Calu3 (cell line): ENCODE measurements at regions of chr2 and their contacts with region 1.

Region 1: DNA sequence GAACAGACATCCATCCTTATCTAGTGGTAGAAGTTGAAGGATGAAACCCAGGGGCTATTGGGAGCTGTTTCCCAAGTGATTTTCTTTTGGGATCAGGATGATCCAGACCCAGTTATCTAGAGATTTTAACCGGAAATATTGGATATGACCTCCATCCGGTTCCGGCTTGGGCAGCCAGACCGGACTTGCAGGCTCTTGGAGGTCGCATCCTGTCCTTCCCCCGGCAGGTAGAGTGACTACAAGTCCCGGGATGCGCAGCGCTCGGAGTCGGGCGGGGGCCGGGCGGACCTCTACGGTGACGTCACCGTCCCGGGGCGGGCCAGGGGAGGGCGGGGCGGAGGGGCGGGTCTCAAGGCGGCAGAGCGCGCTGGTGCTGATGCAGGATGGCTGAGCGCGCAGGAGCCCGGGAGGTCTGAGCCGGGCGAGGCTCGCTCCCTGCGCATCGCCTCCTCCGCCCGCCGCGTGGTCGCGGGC is at the start of gene KIF5C:
- DNase-seq: peak; percentile 91
- H3K4me3 Mint-ChIP-seq: peak within 1 kb of the TSS; percentile 54
- H3K27ac Mint-ChIP-seq: no peak within 1 kb of the TSS
- H3K4me1 Mint-ChIP-seq: peaks cover 6% of the 10 kb centered on the region
- H3K27me3 Mint-ChIP-seq: peaks cover 36% of the 10 kb centered on the region
- CTCF ChIP-seq: no peak
- total RNA-seq, gene KIF5C: 0.87 and 2.9 TPM in 2 replicates

Region 2: GRCh38 chr2:148730085-148730484 is 144.8 kb before region 1 on chr2:
- CTCF ChIA-PET with region 1: no interaction called
- intact Hi-C with region 1: no loop called
- DNase-seq: no peak
- H3K4me3 Mint-ChIP-seq: no peak overlapping the region
- H3K27ac Mint-ChIP-seq: no peak overlapping the region
- H3K4me1 Mint-ChIP-seq: no peaks in the 10 kb centered on the region
- H3K27me3 Mint-ChIP-seq: no peaks in the 10 kb centered on the region
- CTCF ChIP-seq: no peak

Region 3: DNA sequence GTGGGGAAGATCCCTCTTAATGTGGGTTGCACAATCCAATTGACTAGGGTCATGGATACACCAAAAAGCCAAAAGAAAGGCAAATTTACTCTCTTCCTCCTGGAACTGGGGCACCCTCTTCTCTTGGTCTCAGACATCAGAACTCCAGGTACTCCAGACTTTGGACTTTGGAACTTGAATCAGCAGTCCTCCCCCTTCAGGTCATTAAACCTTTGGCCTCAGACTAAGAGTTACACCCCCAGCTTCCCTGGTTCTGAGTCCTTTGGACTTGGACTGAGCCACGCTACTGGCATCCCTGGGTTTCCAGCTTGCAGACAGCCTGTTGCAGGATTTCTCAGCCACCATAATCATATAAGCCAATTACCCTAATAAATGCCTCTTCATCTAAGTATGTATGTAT is 50.7 kb before region 1 on chr2:
- CTCF ChIA-PET with region 1: no interaction called
- intact Hi-C with region 1: loop called (anchors 5 kb)
- DNase-seq: no peak
- H3K4me3 Mint-ChIP-seq: no peak overlapping the region
- H3K27ac Mint-ChIP-seq: no peak overlapping the region
- H3K4me1 Mint-ChIP-seq: no peaks in the 10 kb centered on the region
- H3K27me3 Mint-ChIP-seq: peaks cover 3% of the 10 kb centered on the region
- CTCF ChIP-seq: no peak